IMR-90 (cell line): ENCODE measurements at regions of chr4 and their contacts with region 1.

Region 1: DNA sequence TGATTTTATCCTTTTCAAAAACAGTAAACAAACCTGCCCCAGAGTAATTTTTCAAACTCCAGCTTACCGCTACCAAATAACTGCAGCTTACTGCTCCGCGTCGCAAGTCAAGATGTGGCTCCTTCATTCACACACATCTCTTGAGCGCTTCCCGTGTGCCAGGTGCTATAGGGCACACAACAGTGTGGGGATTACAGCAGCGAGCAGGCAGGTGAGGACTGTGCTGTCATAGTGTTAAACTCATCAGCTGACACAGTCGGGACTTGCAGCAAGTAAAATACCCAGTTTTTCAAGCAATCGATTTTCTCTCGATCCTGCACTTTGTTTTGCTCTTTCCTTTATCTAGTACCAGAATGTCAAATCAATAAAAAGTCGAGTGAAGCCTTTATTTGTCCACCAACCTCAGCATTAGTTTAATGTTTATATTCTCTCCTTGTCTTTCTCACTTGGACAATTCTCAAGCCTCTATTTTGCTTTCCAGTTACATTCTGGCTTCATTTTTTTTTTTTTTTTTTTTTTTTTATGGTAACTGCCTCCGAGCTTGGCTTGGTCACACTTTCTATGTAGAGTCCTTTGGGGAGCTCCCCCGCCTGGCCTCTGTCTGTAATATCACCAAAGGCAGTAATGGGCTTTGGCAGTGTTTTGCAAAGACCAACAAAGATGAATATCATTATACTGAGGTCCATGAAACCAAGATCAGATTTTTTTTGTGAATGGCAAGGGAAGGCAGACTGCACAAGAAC is 8.3 kb upstream of the ASB5 start:
- DNase-seq: peak; percentile 71
- ATAC-seq: peak; percentile 92
- H3K4me3 ChIP-seq: no peak overlapping the region
- H3K27ac ChIP-seq: peak overlapping the region; percentile 28; the same call in 1 of the 2 replicates
- H3K4me1 ChIP-seq: peaks cover 5% of the 10 kb centered on the region
- H3K27me3 ChIP-seq: no peaks in the 10 kb centered on the region
- CTCF ChIP-seq: peak; percentile 74
- POLR2A ChIP-seq: no peak
- RAD21 ChIP-seq: peak; percentile 77

Region 2: DNA sequence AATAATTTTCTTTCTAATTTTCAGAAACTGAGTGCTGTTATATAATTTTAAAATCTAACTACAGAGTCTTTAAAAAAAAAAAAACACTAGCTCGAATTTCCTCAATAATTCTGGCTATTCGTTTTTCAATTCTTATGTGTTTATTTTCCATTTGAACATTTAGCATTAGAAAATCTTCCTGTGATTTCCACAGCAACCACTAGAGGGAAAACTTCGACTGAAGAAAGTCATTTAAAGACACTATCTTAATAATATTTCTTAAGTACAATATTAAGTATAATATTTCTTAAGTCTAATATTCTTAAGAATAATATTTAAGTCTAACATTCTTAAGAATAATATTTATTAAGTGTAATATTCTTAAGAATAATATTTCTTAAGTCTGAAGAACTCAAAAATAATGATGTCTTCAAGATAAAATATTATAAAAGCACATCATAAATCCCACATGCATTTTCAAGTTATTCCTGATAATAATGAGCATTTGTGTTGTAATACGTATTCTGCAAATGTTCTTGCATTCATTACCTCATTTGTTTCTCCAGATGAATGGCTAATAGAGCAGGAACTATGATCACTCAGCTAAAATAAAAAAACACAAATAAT is 330.1 kb before region 1 on chr4:
- CTCF ChIA-PET with region 1: no interaction called
- POLR2A ChIA-PET with region 1: no interaction called
- dilution Hi-C with region 1: no loop called
- in situ Hi-C with region 1: no loop called
- intact Hi-C with region 1: loop called (anchors 5 kb)
- DNase-seq: peak; percentile 43
- ATAC-seq: no peak
- H3K4me3 ChIP-seq: no peak overlapping the region
- H3K27ac ChIP-seq: no peak overlapping the region
- H3K4me1 ChIP-seq: no peaks in the 10 kb centered on the region
- H3K27me3 ChIP-seq: no peaks in the 10 kb centered on the region
- CTCF ChIP-seq: peak; percentile 64
- POLR2A ChIP-seq: no peak
- RAD21 ChIP-seq: peak; percentile 48

Region 3: DNA sequence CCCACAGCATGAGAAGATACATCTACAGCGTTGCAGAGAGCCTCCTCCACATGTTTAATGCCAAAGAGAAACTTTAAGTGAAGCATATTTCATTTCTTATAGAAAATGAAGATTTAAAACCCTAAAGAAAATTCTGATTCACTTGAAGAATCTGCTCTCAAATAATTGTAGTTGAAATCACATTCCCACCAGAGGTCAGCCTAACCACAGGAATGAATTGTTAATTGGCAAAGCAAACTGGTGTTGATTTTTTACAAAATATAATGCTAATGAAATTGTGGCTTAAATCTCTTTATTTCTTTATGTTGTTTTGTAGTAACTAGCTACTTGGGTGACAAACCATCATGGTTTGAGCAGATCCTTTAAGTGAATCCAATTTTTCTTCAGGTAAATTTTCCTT is 242.8 kb before region 1 on chr4:
- CTCF ChIA-PET with region 1: no interaction called
- POLR2A ChIA-PET with region 1: no interaction called
- dilution Hi-C with region 1: no loop called
- in situ Hi-C with region 1: no loop called
- intact Hi-C with region 1: loop called (anchors 2 kb)
- DNase-seq: peak; percentile 55
- ATAC-seq: peak; percentile 65; the same call in 1 of the 2 replicates
- H3K4me3 ChIP-seq: no peak overlapping the region
- H3K27ac ChIP-seq: no peak overlapping the region
- H3K4me1 ChIP-seq: no peaks in the 10 kb centered on the region
- H3K27me3 ChIP-seq: no peaks in the 10 kb centered on the region
- CTCF ChIP-seq: peak; percentile 66
- POLR2A ChIP-seq: no peak
- RAD21 ChIP-seq: peak; percentile 76

Region 4: GRCh38 chr4:176150356-176150682 is 127.0 kb before region 1 on chr4:
- CTCF ChIA-PET with region 1: interaction called, 8 read pairs
- POLR2A ChIA-PET with region 1: no interaction called
- dilution Hi-C with region 1: no loop called
- in situ Hi-C with region 1: no loop called
- intact Hi-C with region 1: loop called (anchors 1 kb)
- DNase-seq: peak; percentile 46
- ATAC-seq: peak; percentile 66
- H3K4me3 ChIP-seq: no peak overlapping the region
- H3K27ac ChIP-seq: no peak overlapping the region
- H3K4me1 ChIP-seq: no peaks in the 10 kb centered on the region
- H3K27me3 ChIP-seq: no peaks in the 10 kb centered on the region
- CTCF ChIP-seq: peak; percentile 46
- POLR2A ChIP-seq: no peak
- RAD21 ChIP-seq: peak; percentile 58

Region 5: DNA sequence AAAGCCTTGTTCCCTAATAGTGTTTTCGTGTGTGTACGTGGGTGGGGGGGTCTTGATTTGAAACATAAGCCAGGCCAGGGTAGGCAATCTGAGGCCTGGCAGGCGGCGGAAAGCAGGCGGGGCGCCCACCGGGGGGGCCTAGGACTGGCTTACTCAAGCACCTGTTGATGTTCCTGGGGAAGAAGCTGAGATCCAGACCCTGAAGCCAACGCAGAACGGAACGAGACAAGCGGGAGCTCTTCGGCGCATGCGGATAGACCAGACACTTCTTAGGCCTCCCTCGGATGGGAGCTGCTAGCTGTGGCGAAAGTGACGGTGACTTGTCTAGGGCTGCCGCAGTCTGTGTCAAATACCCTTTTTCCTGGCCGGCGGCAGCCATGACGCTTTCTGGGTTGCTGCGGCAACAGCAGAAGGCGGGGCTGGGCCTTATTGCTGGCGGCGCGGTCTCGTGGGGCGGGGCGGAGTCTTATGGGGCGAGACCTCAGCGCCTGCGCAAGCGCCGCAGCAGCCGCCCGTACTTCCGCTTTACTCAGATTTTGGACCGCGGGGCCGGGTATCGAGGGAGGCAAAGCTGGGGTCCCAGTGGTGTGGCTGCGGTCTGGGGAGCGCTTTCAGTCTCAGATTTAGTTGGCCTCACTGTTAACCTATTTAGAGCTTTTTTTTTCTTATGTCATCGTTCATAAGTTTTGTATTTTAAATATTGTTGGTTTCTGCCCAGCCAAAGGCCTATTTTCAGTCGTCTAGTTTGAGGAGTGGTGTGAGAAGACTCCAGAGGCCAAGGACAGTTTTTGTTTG is 82.0 kb before region 1 on chr4 and contains the start of gene SPATA4:
- CTCF ChIA-PET with region 1: no interaction called
- POLR2A ChIA-PET with region 1: no interaction called
- dilution Hi-C with region 1: no loop called
- in situ Hi-C with region 1: loop called (anchors 10 kb)
- intact Hi-C with region 1: no loop called
- DNase-seq: peak; percentile 89
- ATAC-seq: peak; percentile 97
- H3K4me3 ChIP-seq: peak within 1 kb of the TSS; percentile 58
- H3K27ac ChIP-seq: peak within 1 kb of the TSS; percentile 88
- H3K4me1 ChIP-seq: peaks cover 7% of the 10 kb centered on the region
- H3K27me3 ChIP-seq: no peaks in the 10 kb centered on the region
- CTCF ChIP-seq: no peak
- POLR2A ChIP-seq: peak; percentile 81
- RAD21 ChIP-seq: no peak
- total RNA-seq, gene SPATA4: under 0.01 and 0.28 TPM in 2 replicates

Region 6: DNA sequence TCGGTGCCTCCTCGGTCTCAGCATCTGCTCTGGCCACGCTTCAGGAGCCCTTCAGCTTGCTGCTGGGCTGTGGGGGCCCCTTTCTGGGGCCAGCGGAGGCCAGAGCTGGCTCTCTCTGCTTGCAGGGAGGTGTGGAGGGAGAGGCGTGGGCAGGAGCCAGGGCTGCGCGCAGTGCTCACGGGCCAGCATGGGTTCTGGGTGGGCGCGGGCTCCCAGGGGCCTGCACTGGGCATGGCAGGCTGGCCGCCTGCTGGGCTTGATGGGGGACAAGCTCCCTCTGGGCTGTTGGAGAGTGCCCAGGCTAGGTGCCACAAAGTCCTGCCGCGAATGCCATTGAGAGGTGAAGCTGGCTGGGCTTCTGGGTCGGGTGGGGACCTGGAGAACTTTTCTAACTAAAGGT is 1222.2 kb after region 1 on chr4:
- CTCF ChIA-PET with region 1: interaction called, 10 read pairs
- POLR2A ChIA-PET with region 1: no interaction called
- dilution Hi-C with region 1: no loop called
- in situ Hi-C with region 1: no loop called
- intact Hi-C with region 1: no loop called
- DNase-seq: no peak
- ATAC-seq: no peak
- H3K4me3 ChIP-seq: no peak overlapping the region
- H3K27ac ChIP-seq: no peak overlapping the region
- H3K4me1 ChIP-seq: no peaks in the 10 kb centered on the region
- H3K27me3 ChIP-seq: no peaks in the 10 kb centered on the region
- CTCF ChIP-seq: no peak
- POLR2A ChIP-seq: no peak
- RAD21 ChIP-seq: no peak